ENCODE measurements at regions of chr16 and their contacts with region 1.

Region 1: GRCh38 chr16:684067-684794 is at the start of gene JMJD8:
- DNase-seq: peak; percentile 83 to 97 (median 90)
- ATAC-seq: peak; percentile 76
- H3K4me3 ChIP-seq: peak within 1 kb of the TSS; percentile 98
- H3K27ac ChIP-seq: peak within 1 kb of the TSS; percentile 88
- H3K4me1 ChIP-seq: peaks cover 27 to 96% of the 10 kb centered on the region in 2 experiments
- H3K27me3 ChIP-seq: no peaks in the 10 kb centered on the region
- CTCF ChIP-seq: 0 out of 6 replicates have a peak, but pooled peaks of 1 of the 3 experiments have one; percentile 1
- EP300 ChIP-seq: no peak; the same call in 1 of the 2 replicates
- POLR2A ChIP-seq: peak; percentile 59; the same call in 1 of the 2 replicates
- RAD21 ChIP-seq: no peak
- polyA plus RNA-seq, gene JMJD8: 1.2 to 2.3 TPM

Region 2: GRCh38 chr16:397736-398332 is 286.4 kb before region 1 on chr16:
- CTCF ChIA-PET with region 1: no interaction called
- POLR2A ChIA-PET with region 1: interaction called, 3 read pairs
- in situ Hi-C with region 1: loop called (anchors 10 kb)
- intact Hi-C with region 1: loop called (anchors 5 kb)
- DNase-seq: peak in 2 of 4 experiments; percentile 65 to 74
- ATAC-seq: peak; percentile 46
- H3K4me3 ChIP-seq: peak overlapping the region; percentile 70
- H3K27ac ChIP-seq: peak overlapping the region; percentile 79
- H3K4me1 ChIP-seq: peaks cover 29 to 64% of the 10 kb centered on the region in 2 experiments
- H3K27me3 ChIP-seq: no peaks in the 10 kb centered on the region
- CTCF ChIP-seq: peak; percentile 50 to 81 (median 51)
- EP300 ChIP-seq: no peak
- POLR2A ChIP-seq: no peak
- RAD21 ChIP-seq: no peak

Region 3: GRCh38 chr16:636206-637080 is 47.8 kb before region 1 on chr16 and contains the start of gene METTL26:
- CTCF ChIA-PET with region 1: no interaction called
- POLR2A ChIA-PET with region 1: interaction called, 5 read pairs
- in situ Hi-C with region 1: no loop called
- intact Hi-C with region 1: loop called (anchors 5 kb)
- DNase-seq: peak; percentile 78 to 97 (median 86)
- ATAC-seq: peak; percentile 87
- H3K4me3 ChIP-seq: peak within 1 kb of the TSS; percentile 87
- H3K27ac ChIP-seq: peak within 1 kb of the TSS; percentile 93
- H3K4me1 ChIP-seq: peaks cover 14 to 83% of the 10 kb centered on the region in 2 experiments; a peak in 4 of 5 replicates
- H3K27me3 ChIP-seq: no peaks in the 10 kb centered on the region
- CTCF ChIP-seq: peak in 2 of 3 experiments; percentile 46 to 68; a peak in 4 of 6 replicates
- EP300 ChIP-seq: peak; percentile 69
- POLR2A ChIP-seq: peak; percentile 69
- RAD21 ChIP-seq: peak; percentile 9 to 41; a peak in 2 of 4 replicates
- polyA plus RNA-seq, gene METTL26: 7.3 to 11.6 TPM

Region 4: DNA sequence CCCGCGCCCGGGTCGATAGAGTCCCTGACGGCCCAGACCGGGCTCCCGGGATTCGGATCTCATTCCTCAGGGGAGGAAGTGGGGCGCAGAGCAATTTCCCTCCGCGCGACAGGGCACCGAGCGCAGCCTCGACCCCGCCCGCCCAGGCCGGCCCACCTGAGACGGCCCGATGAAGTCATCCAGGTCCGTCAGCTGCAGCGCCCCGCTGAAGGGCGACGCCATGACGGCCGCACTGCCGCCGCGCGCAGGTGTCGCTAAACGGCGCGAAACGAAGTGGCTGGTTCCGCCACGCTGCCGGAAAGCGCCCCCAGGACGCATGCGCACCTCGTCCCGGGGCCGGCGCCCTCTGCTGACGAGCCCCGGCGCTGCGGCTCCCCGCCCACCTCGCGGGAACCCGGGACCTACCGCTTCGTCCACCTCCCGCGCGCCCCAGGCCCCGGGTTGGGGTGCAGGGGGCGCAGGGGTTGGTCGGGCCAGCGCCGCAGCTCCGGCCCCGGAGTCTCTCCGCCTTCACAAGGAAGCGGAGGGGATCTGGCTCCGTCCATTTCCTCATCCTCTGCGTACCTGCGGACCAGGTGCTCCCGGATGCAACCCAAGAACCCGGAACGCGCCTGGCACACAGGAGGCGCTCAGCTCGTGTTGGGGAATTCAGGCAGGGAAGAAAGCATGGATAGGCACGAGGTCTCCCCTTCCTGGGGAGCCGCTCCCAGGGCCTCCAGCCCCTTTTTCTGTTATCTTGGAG is 56.7 kb after region 1 on chr16 and contains the start of gene CIAO3:
- CTCF ChIA-PET with region 1: no interaction called
- POLR2A ChIA-PET with region 1: no interaction called
- in situ Hi-C with region 1: no loop called
- intact Hi-C with region 1: no loop called
- DNase-seq: peak; percentile 94 to 95 (median 94)
- ATAC-seq: peak; percentile 93
- H3K4me3 ChIP-seq: peak within 1 kb of the TSS; percentile 96
- H3K27ac ChIP-seq: peak within 1 kb of the TSS; percentile 90
- H3K4me1 ChIP-seq: peaks cover 18 to 78% of the 10 kb centered on the region in 2 experiments
- H3K27me3 ChIP-seq: no peaks in the 10 kb centered on the region
- CTCF ChIP-seq: peak; percentile 86 to 87 (median 86)
- EP300 ChIP-seq: 0 out of 2 replicates have a peak, but pooled peaks have one; percentile 10
- POLR2A ChIP-seq: peak; percentile 77
- RAD21 ChIP-seq: peak in 1 of 2 experiments; percentile 28; a peak in 2 of 4 replicates
- polyA plus RNA-seq, gene CIAO3: 2.2 to 2.4 TPM